Activated CD4-positive, alpha-beta memory T cell treated with anti-CD3 and anti-CD28 coated beads, Interleukin-2, amount 10 ng/mL, durations not matched to agents 7 days and 5 days (primary cell): ENCODE measurements at regions of chr1 and their contacts with region 1.

Region 1: GRCh38 chr1:151156515-151156819 is at the start of gene TNFAIP8L2:
- DNase-seq: peak; percentile 87
- H3K4me3 Mint-ChIP-seq: peak within 1 kb of the TSS; percentile 98
- H3K27ac Mint-ChIP-seq: peak within 1 kb of the TSS; percentile 96
- H3K4me1 Mint-ChIP-seq: peaks cover 50% of the 10 kb centered on the region
- H3K27me3 Mint-ChIP-seq: no peaks in the 10 kb centered on the region
- total RNA-seq, gene TNFAIP8L2: 31.2 to 32.0 TPM

Region 2: GRCh38 chr1:151024540-151025146 is 131.8 kb before region 1 on chr1:
- CTCF ChIA-PET with region 1: interaction called, 51 read pairs
- POLR2A ChIA-PET with region 1: interaction called, 13 read pairs
- DNase-seq: peak; percentile 87
- H3K4me3 Mint-ChIP-seq: peak overlapping the region; percentile 18
- H3K27ac Mint-ChIP-seq: peak overlapping the region; percentile 62
- H3K4me1 Mint-ChIP-seq: peaks cover 6% of the 10 kb centered on the region
- H3K27me3 Mint-ChIP-seq: no peaks in the 10 kb centered on the region

Region 3: DNA sequence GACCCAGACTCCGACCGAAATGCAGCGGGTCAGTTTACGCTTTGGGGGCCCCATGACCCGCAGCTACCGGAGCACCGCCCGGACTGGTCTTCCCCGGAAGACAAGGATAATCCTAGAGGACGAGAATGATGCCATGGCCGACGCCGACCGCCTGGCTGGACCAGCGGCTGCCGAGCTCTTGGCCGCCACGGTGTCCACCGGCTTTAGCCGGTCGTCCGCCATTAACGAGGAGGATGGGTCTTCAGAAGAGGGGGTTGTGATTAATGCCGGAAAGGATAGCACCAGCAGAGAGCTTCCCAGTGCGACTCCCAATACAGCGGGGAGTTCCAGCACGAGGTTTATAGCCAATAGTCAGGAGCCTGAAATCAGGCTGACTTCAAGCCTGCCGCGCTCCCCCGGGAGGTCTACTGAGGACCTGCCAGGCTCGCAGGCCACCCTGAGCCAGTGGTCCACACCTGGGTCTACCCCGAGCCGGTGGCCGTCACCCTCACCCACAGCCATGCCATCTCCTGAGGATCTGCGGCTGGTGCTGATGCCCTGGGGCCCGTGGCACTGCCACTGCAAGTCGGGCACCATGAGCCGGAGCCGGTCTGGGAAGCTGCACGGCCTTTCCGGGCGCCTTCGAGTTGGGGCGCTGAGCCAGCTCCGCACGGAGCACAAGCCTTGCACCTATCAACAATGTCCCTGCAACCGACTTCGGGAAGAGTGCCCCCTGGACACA is 108.4 kb before region 1 on chr1:
- CTCF ChIA-PET with region 1: interaction called, 10 read pairs
- POLR2A ChIA-PET with region 1: interaction called, 7 read pairs
- DNase-seq: peak; percentile 65
- H3K4me3 Mint-ChIP-seq: peak overlapping the region; percentile 82
- H3K27ac Mint-ChIP-seq: peak overlapping the region; percentile 79
- H3K4me1 Mint-ChIP-seq: peaks cover 57% of the 10 kb centered on the region
- H3K27me3 Mint-ChIP-seq: no peaks in the 10 kb centered on the region

Region 4: GRCh38 chr1:151059078-151059907 is 97.2 kb before region 1 on chr1 and contains the start of gene CDC42SE1:
- CTCF ChIA-PET with region 1: interaction called, 21 read pairs
- POLR2A ChIA-PET with region 1: interaction called, 65 read pairs
- DNase-seq: peak; percentile 87
- H3K4me3 Mint-ChIP-seq: peak within 1 kb of the TSS; percentile 97
- H3K27ac Mint-ChIP-seq: peak within 1 kb of the TSS; percentile 97
- H3K4me1 Mint-ChIP-seq: peaks cover 51% of the 10 kb centered on the region
- H3K27me3 Mint-ChIP-seq: no peaks in the 10 kb centered on the region
- total RNA-seq, gene CDC42SE1: 345 to 347 TPM

Region 5: GRCh38 chr1:151070474-151071276 is 85.8 kb before region 1 on chr1 and contains the start of gene GABPB2:
- CTCF ChIA-PET with region 1: interaction called, 22 read pairs
- POLR2A ChIA-PET with region 1: interaction called, 13 read pairs
- DNase-seq: peak; percentile 88
- H3K4me3 Mint-ChIP-seq: peak within 1 kb of the TSS; percentile 98
- H3K27ac Mint-ChIP-seq: peak within 1 kb of the TSS; percentile 99
- H3K4me1 Mint-ChIP-seq: peaks cover 31% of the 10 kb centered on the region
- H3K27me3 Mint-ChIP-seq: no peaks in the 10 kb centered on the region
- total RNA-seq, gene GABPB2: 24.5 to 25.9 TPM

Region 6: GRCh38 chr1:151189638-151190445 is 33.4 kb after region 1 on chr1 and contains the start of gene VPS72:
- CTCF ChIA-PET with region 1: interaction called, 3 read pairs
- POLR2A ChIA-PET with region 1: interaction called, 16 read pairs
- DNase-seq: peak; percentile 89
- H3K4me3 Mint-ChIP-seq: peak within 1 kb of the TSS; percentile 100
- H3K27ac Mint-ChIP-seq: peak within 1 kb of the TSS; percentile 95
- H3K4me1 Mint-ChIP-seq: peaks cover 35% of the 10 kb centered on the region
- H3K27me3 Mint-ChIP-seq: peaks cover 3% of the 10 kb centered on the region
- total RNA-seq, gene VPS72: 76.1 to 78.8 TPM

Region 7: GRCh38 chr1:151254217-151255213 is 98.0 kb after region 1 on chr1 and contains the start of gene PSMD4:
- CTCF ChIA-PET with region 1: interaction called, 17 read pairs
- POLR2A ChIA-PET with region 1: interaction called, 5 read pairs
- DNase-seq: peak; percentile 95
- H3K4me3 Mint-ChIP-seq: peak within 1 kb of the TSS; percentile 87
- H3K27ac Mint-ChIP-seq: peak within 1 kb of the TSS; percentile 83
- H3K4me1 Mint-ChIP-seq: peaks cover 29% of the 10 kb centered on the region
- H3K27me3 Mint-ChIP-seq: no peaks in the 10 kb centered on the region
- total RNA-seq, gene PSMD4: 178 to 188 TPM

Region 8: GRCh38 chr1:151273925-151274466 is 117.5 kb after region 1 on chr1:
- CTCF ChIA-PET with region 1: no interaction called
- POLR2A ChIA-PET with region 1: no interaction called
- DNase-seq: no peak
- H3K4me3 Mint-ChIP-seq: no peak overlapping the region
- H3K27ac Mint-ChIP-seq: no peak overlapping the region
- H3K4me1 Mint-ChIP-seq: peaks cover 15% of the 10 kb centered on the region
- H3K27me3 Mint-ChIP-seq: no peaks in the 10 kb centered on the region